K562 (cell line): ENCODE measurements at regions of chr16 and their contacts with region 1.

Region 1: DNA sequence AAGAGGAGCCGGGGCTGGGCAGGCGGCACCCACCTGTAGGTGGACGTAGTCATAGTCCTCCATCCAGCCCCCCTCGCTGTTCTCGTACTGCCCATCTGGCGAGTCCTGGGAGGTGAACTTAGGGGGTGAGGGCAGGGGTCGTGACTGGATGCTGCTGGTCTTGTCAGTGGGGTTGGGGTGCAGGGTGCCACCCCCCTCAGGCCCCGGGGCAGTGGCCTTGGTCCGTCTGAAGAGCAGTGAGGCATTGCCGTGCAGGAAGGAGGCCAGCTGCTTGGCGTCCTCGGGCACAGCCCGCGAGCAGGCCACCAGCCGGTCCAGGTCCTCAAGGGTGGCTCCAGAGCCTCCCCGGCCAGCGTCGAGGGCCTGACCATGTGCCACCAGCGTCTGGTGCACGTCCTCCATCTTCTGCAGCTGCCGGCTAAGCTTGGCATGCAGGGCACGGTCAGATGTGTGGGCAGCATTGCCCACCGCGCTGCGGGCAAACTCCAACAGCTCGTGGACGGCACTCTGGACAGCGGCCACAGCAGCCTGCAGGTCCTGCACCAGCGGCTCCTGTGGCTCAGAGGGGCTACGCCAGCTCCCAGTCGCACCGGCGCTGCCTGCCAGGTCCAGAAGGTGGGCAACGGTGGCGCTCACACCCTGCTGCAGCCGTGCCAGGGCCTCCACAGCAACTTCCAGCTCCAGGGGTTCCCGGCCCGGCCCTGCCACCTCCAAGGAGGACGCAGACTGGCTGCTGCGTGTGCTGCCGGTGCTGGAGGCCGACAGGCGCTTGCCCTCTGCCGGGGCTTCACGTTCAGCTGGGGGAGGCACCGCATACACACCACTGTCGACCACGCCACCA is 16.3 kb downstream of the CTRB1 start:
- DNase-seq: no peak
- ATAC-seq: no peak
- H3K4me3 ChIP-seq: no peak overlapping the region
- H3K27ac ChIP-seq: no peak overlapping the region
- H3K4me1 ChIP-seq: peaks cover 0 to 62% of the 10 kb centered on the region in 2 experiments; a peak in 3 of 5 replicates
- H3K27me3 ChIP-seq: no peaks in the 10 kb centered on the region
- CTCF ChIP-seq: no peak
- EP300 ChIP-seq: no peak
- POLR2A ChIP-seq: no peak
- RAD21 ChIP-seq: no peak

Region 2: DNA sequence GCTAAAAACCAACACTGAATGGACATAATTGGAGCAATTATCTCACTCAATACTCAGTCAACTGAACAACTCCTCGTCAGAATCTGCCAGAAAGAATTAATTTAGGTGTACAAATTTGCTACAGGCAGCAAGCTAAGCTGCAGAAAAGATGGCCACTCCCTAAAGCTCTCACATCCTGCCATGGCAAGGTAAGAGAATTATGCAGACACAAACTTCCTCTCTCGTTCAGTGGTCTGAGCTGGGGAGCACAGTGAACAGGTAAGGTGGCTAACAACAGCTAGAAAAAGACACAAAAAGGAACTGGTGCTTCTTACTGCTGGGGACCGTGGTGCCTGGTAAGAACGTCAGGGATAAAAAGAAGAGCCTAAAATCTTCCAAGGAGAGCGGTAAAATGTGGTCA is 91.3 kb after region 1 on chr16:
- CTCF ChIA-PET with region 1: no interaction called
- POLR2A ChIA-PET with region 1: no interaction called
- in situ Hi-C with region 1: no loop called
- intact Hi-C with region 1: loop called (anchors 5 kb)
- DNase-seq: no peak
- ATAC-seq: no peak
- H3K4me3 ChIP-seq: no peak overlapping the region
- H3K27ac ChIP-seq: no peak overlapping the region
- H3K4me1 ChIP-seq: peaks cover 3 to 8% of the 10 kb centered on the region in 2 experiments; a peak in 2 of 5 replicates
- H3K27me3 ChIP-seq: no peaks in the 10 kb centered on the region
- CTCF ChIP-seq: no peak
- EP300 ChIP-seq: no peak
- POLR2A ChIP-seq: no peak
- RAD21 ChIP-seq: no peak

Region 3: GRCh38 chr16:75385507-75386152 is 150.6 kb after region 1 on chr16:
- CTCF ChIA-PET with region 1: interaction called, 27 read pairs
- POLR2A ChIA-PET with region 1: interaction called, 5 read pairs
- in situ Hi-C with region 1: no loop called
- intact Hi-C with region 1: loop called (anchors 1 kb)
- DNase-seq: peak; percentile 39 to 85 (median 45)
- ATAC-seq: peak; percentile 67
- H3K4me3 ChIP-seq: no peak overlapping the region
- H3K27ac ChIP-seq: no peak overlapping the region
- H3K4me1 ChIP-seq: peaks cover 0 to 3% of the 10 kb centered on the region in 2 experiments; a peak in 1 of 5 replicates
- H3K27me3 ChIP-seq: no peaks in the 10 kb centered on the region
- CTCF ChIP-seq: peak in 2 of 3 experiments; percentile 48 to 76; a peak in 4 of 6 replicates
- EP300 ChIP-seq: no peak
- POLR2A ChIP-seq: no peak
- RAD21 ChIP-seq: peak; percentile 94

Region 4: GRCh38 chr16:75402821-75403475 is 167.9 kb after region 1 on chr16:
- CTCF ChIA-PET with region 1: interaction called, 10 read pairs
- POLR2A ChIA-PET with region 1: no interaction called
- in situ Hi-C with region 1: no loop called
- intact Hi-C with region 1: loop called (anchors 5 kb)
- DNase-seq: peak; percentile 18 to 36 (median 22)
- ATAC-seq: peak; percentile 63; the same call in 2 of the 3 replicates
- H3K4me3 ChIP-seq: no peak overlapping the region
- H3K27ac ChIP-seq: no peak overlapping the region
- H3K4me1 ChIP-seq: no peaks in the 10 kb centered on the region; a peak in 1 of 5 replicates
- H3K27me3 ChIP-seq: no peaks in the 10 kb centered on the region
- CTCF ChIP-seq: peak; percentile 12 to 77 (median 50); a peak in 4 of 6 replicates
- EP300 ChIP-seq: no peak
- POLR2A ChIP-seq: no peak
- RAD21 ChIP-seq: peak; percentile 48 to 62